ENCODE measurements at regions of chr20 and their contacts with region 1.

Region 1: DNA sequence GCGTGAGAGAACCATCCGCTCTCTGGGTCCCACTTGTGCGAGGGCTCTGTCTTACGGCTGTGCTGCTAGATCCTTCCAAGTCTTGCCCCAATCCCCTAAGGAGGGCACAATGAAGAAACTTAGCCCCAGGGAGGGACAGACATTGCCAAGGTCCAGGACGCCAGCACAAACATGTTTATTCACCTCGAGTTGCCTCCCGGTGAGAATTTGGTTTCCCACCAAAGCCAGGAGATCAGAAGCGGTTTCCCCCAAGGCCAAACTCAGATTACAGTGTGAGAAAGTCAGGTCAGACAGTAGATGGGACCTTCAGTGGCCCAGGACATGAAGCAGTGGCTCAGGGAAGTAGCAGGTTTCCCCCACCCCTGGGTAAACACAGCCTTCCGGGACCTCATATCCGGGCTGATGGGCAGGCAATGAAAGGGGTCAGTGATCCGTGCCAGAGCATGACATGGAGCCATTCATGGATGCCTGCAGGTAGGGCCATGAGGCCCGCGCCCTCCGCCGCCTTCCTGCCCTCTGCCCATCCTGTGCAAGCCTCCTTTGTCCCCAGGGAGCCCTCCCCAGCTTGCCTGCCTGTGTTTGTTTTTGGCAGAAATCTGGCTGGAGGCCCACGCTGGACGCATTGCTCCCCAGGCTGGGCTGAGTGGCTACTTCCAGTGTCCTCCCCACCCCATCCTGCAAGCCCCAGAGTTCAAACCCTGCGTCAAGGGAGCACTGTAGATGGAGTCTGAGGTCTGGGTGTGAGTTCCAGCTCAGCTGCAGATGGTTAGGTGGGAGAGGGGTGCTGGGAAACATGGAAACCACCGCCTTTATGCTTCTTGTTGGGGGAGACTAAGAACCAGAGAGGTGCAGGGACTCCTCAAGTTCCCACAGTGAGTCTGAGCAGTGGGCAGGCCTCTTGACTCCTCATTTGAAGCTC is 2.0 kb downstream of the BPIFB2 start:
- DNase-seq: peak; percentile 71

Region 2: GRCh38 chr20:33038243-33038642 is 28.8 kb after region 1 on chr20:
- intact Hi-C with region 1: loop called in 1 of 2 experiments (anchors 1 kb)
- DNase-seq: no peak

Region 3: DNA sequence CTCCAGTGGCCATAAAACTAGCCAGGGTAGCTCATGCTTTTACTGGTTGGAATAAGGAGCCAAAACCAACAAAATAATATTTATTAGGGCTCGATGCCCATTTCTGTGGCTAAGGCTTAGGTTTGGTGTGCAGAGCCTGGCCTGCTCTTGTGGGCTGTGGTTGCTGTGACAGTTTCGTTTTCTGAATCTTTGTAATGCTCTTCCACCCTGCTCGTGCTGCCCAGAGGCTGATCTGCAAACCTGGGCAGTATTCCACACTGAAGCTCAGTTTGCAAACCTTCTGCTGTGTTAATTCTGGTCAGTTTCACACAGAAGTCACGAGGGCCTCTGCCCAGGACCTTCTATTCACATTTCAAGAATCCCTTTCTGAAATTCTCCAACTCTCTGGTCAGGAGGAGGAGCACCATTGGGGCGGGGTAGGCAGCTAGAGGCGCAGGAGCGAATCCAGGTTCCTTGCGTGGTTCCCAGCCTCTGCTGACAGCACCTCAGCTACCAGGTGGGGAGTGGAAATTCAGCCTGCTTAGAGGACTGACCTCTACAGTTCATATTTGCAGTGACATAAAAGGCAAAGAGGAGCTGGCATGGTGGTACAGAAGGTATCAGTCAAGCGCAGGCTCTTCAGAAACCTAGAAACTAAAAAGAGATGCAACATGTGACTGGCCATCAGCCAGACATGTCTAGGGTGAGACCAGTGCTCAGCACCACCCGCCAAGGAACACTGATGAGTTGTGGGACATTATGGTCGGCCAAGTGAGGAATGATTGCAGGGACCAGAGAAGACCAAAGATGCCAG is 638.3 kb after region 1 on chr20:
- intact Hi-C with region 1: loop called in 1 of 2 experiments (anchors 10 kb)
- DNase-seq: peak; percentile 79